ENCODE measurements at regions of chr6 and their contacts with region 1.

Region 1: GRCh38 chr6:25278914-25279747 is at the start of gene CARMIL1:
- ATAC-seq: peak; percentile 83 to 94 (median 90)
- H3K4me3 ChIP-seq: peak within 1 kb of the TSS; percentile 64 to 92 (median 74)
- H3K27ac ChIP-seq: no peak within 1 kb of the TSS
- H3K4me1 ChIP-seq: peaks cover 5 to 11% of the 10 kb centered on the region in 2 donors
- total RNA-seq, gene CARMIL1: 1.7 to 52.5 (median 6.4) TPM

Region 2: DNA sequence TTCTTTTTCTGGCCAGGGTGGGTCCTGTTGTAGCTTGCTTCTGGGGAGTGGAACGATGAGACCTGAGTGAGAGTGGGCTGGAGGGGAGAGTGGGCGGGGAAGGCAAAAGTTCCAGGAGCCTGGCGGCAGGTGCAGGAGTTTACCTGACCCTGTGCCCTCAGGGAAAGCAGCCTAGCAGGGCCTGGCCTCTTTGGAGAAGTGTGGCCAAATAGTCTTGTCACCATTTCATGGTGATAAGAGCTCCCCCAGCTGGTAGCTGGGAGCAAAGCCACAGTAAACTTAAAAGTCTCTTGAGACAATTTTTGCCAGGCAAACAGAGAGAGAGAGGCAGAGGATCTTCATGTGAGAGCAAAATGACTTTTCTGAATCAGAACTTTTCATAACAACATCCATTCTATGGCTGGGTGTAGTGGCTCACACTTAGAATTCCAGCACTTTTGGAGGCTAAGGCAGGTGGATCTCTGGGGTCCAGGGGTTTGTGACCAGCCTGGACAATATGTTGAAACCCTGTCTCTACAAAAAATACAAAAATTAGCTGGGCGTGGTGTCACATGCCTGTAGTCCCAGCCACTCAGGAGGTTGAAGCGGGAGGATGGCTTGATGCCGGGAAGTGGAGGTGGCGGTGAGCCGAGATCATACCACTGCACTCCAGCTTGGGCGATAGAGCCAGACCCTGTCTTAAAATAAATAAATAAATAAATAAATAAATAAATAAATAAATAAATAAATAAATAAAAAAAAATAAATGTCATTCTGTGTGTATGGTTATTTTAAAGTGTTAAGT is 211.1 kb after region 1 on chr6:
- in situ Hi-C with region 1: loop called in 4 of 9 experiments (anchors 10 to 25 kb)
- ATAC-seq: peak; percentile 61 to 97 (median 77)
- H3K4me3 ChIP-seq: no peak overlapping the region
- H3K27ac ChIP-seq: no peak overlapping the region
- H3K4me1 ChIP-seq: no peaks in the 10 kb centered on the region

Measured in motor neuron (in vitro differentiated cells).